ENCODE measurements at regions of chr5 and their contacts with region 1.

Region 1: GRCh38 chr5:16642862-16643261 is 26.1 kb upstream of the RETREG1 start:
- DNase-seq: no peak
- ATAC-seq: no peak
- H3K4me3 ChIP-seq: no peak overlapping the region
- H3K4me3 Mint-ChIP-seq: no peak overlapping the region
- H3K27ac ChIP-seq: no peak overlapping the region
- H3K27ac Mint-ChIP-seq: no peak overlapping the region
- H3K4me1 ChIP-seq: peaks cover 0 to 3% of the 10 kb centered on the region in 2 experiments
- H3K4me1 Mint-ChIP-seq: peaks cover 11 to 13% (median 12%) of the 10 kb centered on the region in 3 donors
- H3K27me3 ChIP-seq: no peaks in the 10 kb centered on the region
- H3K27me3 Mint-ChIP-seq: no peaks in the 10 kb centered on the region

Region 2: GRCh38 chr5:16617274-16617968 is 25.4 kb before region 1 on chr5:
- CTCF ChIA-PET with region 1: interaction called in 1 of 2 experiments, 14 read pairs
- POLR2A ChIA-PET with region 1: no interaction called
- DNase-seq: peak; percentile 16 to 73 (median 52)
- ATAC-seq: peak; percentile 46 to 54 (median 48)
- H3K4me3 ChIP-seq: peak overlapping the region; percentile 80 to 94
- H3K4me3 Mint-ChIP-seq: no peak overlapping the region
- H3K27ac ChIP-seq: peak overlapping the region; percentile 99
- H3K27ac Mint-ChIP-seq: no peak overlapping the region
- H3K4me1 ChIP-seq: peaks cover 29 to 41% of the 10 kb centered on the region in 2 experiments
- H3K4me1 Mint-ChIP-seq: peaks cover 39 to 43% (median 39%) of the 10 kb centered on the region in 3 donors
- H3K27me3 ChIP-seq: peaks cover 0 to 6% of the 10 kb centered on the region in 2 experiments
- H3K27me3 Mint-ChIP-seq: no peaks in the 10 kb centered on the region